Activated CD4-positive, alpha-beta T cell treated with anti-CD3 and anti-CD28 coated beads, Interleukin-2, amount 10 ng/mL, durations not matched to agents 7 days and 5 days (primary cell): ENCODE measurements at regions of chr17 and their contacts with region 1.

Region 1: DNA sequence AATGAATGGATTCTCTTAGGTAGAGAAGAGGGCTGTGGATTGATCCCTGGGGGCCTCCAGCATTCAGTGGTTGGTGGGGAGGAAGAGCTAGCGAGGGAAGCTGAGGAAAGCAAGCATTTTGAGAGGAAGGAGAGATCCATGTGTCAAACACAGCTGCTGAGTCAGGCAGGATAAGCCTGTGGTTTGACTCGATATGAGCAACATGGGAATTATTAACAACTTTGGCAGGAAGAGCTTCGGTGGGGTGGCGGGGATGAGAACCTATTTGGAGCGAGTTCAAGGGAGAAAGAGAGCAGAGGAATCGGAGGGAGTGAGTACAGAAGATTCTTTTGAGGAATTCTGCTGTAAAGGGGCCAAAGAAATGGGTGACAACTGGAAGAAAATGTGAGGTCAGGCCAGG is 59.5 kb upstream of the CDC42EP4 start:
- DNase-seq: no peak
- H3K4me3 Mint-ChIP-seq: no peak overlapping the region
- H3K27ac Mint-ChIP-seq: no peak overlapping the region
- H3K4me1 Mint-ChIP-seq: no peaks in the 10 kb centered on the region
- H3K27me3 Mint-ChIP-seq: peaks cover 2% of the 10 kb centered on the region

Region 2: GRCh38 chr17:73255671-73256181 is 115.6 kb before region 1 on chr17:
- CTCF ChIA-PET with region 1: interaction called, 27 read pairs
- POLR2A ChIA-PET with region 1: no interaction called
- DNase-seq: peak; percentile 54
- H3K4me3 Mint-ChIP-seq: no peak overlapping the region
- H3K27ac Mint-ChIP-seq: no peak overlapping the region
- H3K4me1 Mint-ChIP-seq: peaks cover 3% of the 10 kb centered on the region
- H3K27me3 Mint-ChIP-seq: no peaks in the 10 kb centered on the region